B cell (primary cell): ENCODE measurements at regions of chr11 and their contacts with region 1.

Region 1: DNA sequence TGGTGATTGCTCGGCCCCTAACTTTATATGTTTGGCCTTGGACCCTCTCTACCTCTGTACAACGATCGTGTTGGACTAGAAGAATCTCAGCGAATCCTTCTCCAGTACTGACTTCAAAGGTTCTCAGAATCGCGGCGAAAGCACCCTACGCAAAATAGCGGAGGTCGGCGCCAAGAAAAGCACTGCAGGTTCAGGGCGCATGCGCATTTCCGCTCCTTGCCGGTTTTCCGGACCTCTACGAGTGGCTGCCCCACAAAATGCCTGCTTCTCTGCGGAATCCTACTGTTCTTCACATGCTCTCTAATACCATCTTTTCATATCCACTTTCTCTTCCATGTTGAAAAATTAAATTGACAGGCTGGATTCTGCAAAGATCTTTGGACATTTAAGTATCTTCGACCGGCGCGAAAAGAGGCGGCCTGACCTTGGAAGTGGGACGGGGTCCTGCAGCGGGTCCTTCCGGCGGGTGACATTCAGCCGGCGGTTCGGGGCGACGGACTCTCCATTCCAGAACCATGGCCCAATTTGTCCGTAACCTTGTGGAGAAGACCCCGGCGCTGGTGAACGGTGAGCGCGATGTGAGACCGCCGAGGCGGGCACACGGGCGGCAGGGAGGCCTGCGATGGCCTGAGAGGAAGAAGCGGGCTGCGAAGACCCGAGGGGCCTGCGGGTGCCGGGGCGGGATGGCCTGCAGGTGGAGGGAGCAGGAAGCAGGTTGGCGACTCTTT is at the start of gene ATP5MG:
- DNase-seq: peak; percentile 97
- ATAC-seq: peak; percentile 84
- H3K4me3 ChIP-seq: peak within 1 kb of the TSS; percentile 77 to 96 (median 81)
- H3K4me3 Mint-ChIP-seq: peak within 1 kb of the TSS; percentile 98
- H3K27ac ChIP-seq: peak within 1 kb of the TSS; percentile 77 to 85
- H3K27ac Mint-ChIP-seq: peak within 1 kb of the TSS; percentile 100
- H3K4me1 ChIP-seq: peaks cover 27 to 32% of the 10 kb centered on the region in 2 donors
- H3K4me1 Mint-ChIP-seq: peaks cover 55% of the 10 kb centered on the region
- H3K27me3 ChIP-seq: no peaks in the 10 kb centered on the region
- H3K27me3 Mint-ChIP-seq: no peaks in the 10 kb centered on the region
- CTCF ChIP-seq: peak; percentile 18
- total RNA-seq, gene ATP5MG: 111 and 118 TPM in 2 replicates

Region 2: GRCh38 chr11:118359295-118359958 is 41.9 kb before region 1 on chr11 and contains the start of gene UBE4A:
- CTCF ChIA-PET with region 1: no interaction called
- POLR2A ChIA-PET with region 1: interaction called, 6 read pairs
- intact Hi-C with region 1: loop called (anchors 1 kb)
- DNase-seq: peak; percentile 97
- ATAC-seq: peak; percentile 91
- H3K4me3 ChIP-seq: peak within 1 kb of the TSS; percentile 82 to 98 (median 92)
- H3K4me3 Mint-ChIP-seq: peak within 1 kb of the TSS; percentile 98
- H3K27ac ChIP-seq: peak within 1 kb of the TSS; percentile 73 to 93
- H3K27ac Mint-ChIP-seq: peak within 1 kb of the TSS; percentile 96
- H3K4me1 ChIP-seq: peaks cover 18 to 23% of the 10 kb centered on the region in 2 donors
- H3K4me1 Mint-ChIP-seq: peaks cover 39% of the 10 kb centered on the region
- H3K27me3 ChIP-seq: no peaks in the 10 kb centered on the region
- H3K27me3 Mint-ChIP-seq: no peaks in the 10 kb centered on the region
- CTCF ChIP-seq: no peak
- total RNA-seq, gene UBE4A: 37.3 and 37.7 TPM in 2 replicates

Region 3: DNA sequence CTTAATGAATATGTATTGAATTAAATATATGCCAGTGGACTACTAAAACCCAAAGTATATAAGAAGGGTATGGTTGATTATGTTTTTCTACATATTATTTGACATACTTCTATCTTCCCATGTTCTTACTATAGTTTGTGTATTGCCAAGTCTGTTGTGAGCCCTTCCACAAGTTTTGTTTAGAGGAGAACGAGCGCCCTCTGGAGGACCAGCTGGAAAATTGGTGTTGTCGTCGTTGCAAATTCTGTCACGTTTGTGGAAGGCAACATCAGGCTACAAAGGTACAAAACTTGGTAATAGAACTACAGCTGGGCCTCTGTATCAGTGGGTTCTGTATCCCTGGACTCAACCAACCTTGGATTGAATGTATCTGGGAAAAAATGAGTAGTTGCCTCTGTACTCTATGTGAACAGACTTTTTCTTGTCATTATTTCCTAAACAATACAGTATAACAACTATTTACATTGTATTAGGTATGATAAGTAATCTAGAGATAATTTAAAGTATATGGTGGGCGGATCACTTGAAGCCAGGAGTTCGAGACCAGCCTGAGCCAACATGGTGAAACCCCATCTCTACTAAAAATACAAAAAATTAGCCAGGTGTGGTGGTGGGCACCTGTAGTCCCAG is 87.3 kb after region 1 on chr11:
- CTCF ChIA-PET with region 1: interaction called, 18 read pairs
- POLR2A ChIA-PET with region 1: interaction called, 3 read pairs
- intact Hi-C with region 1: loop called (anchors 1 kb)
- DNase-seq: peak; percentile 84
- ATAC-seq: peak; percentile 60
- H3K4me3 ChIP-seq: no peak overlapping the region
- H3K4me3 Mint-ChIP-seq: no peak overlapping the region
- H3K27ac ChIP-seq: no peak overlapping the region
- H3K27ac Mint-ChIP-seq: no peak overlapping the region
- H3K4me1 ChIP-seq: no peaks in the 10 kb centered on the region
- H3K4me1 Mint-ChIP-seq: no peaks in the 10 kb centered on the region
- H3K27me3 ChIP-seq: no peaks in the 10 kb centered on the region
- H3K27me3 Mint-ChIP-seq: no peaks in the 10 kb centered on the region
- CTCF ChIP-seq: peak; percentile 92